ENCODE measurements at regions of chr1 and their contacts with region 1.

Region 1: DNA sequence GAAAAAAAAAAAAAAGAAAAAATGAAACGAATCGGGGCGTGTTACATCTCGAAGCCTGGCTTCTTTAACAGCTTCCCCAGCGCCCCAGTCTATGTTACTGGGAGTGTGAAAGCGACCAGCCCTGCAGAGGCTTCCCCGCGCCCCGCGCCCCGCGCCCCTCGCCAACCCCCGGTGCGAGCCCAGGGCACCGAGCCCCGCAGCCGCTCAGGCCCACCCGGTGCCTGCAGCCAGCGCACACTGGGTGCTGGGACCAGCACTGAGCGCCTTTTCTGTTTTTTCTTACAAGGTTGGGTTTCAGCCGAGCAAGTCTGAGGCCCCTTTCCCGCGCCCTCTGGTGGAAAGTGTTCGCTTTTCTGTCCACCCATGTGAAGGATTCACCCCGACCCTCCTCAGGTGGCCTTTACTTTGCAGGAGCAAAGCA is 42.1 kb upstream of the ZNF496 start:
- DNase-seq: peak; percentile 9 to 74 (median 65)
- ATAC-seq: peak; percentile 86
- H3K4me3 ChIP-seq: peak overlapping the region in 1 of 2 experiments; percentile 37
- H3K4me3 Mint-ChIP-seq: peak overlapping the region; percentile 56
- H3K27ac ChIP-seq: no peak overlapping the region
- H3K27ac Mint-ChIP-seq: no peak overlapping the region
- H3K4me1 ChIP-seq: no peaks in the 10 kb centered on the region
- H3K4me1 Mint-ChIP-seq: peaks cover 6% of the 10 kb centered on the region
- H3K27me3 ChIP-seq: no peaks in the 10 kb centered on the region
- H3K27me3 Mint-ChIP-seq: peaks cover 2% of the 10 kb centered on the region
- CTCF ChIP-seq: peak; percentile 48

Region 2: GRCh38 chr1:247360991-247361731 is 12.6 kb before region 1 on chr1:
- CTCF ChIA-PET with region 1: interaction called, 10 read pairs
- POLR2A ChIA-PET with region 1: no interaction called
- intact Hi-C with region 1: no loop called
- DNase-seq: no peak
- ATAC-seq: no peak
- H3K4me3 ChIP-seq: no peak overlapping the region
- H3K4me3 Mint-ChIP-seq: no peak overlapping the region
- H3K27ac ChIP-seq: no peak overlapping the region
- H3K27ac Mint-ChIP-seq: no peak overlapping the region
- H3K4me1 ChIP-seq: no peaks in the 10 kb centered on the region
- H3K4me1 Mint-ChIP-seq: peaks cover 3% of the 10 kb centered on the region
- H3K27me3 ChIP-seq: peaks cover 2 to 3% of the 10 kb centered on the region in 2 experiments
- H3K27me3 Mint-ChIP-seq: peaks cover 26% of the 10 kb centered on the region
- CTCF ChIP-seq: no peak

Region 3: DNA sequence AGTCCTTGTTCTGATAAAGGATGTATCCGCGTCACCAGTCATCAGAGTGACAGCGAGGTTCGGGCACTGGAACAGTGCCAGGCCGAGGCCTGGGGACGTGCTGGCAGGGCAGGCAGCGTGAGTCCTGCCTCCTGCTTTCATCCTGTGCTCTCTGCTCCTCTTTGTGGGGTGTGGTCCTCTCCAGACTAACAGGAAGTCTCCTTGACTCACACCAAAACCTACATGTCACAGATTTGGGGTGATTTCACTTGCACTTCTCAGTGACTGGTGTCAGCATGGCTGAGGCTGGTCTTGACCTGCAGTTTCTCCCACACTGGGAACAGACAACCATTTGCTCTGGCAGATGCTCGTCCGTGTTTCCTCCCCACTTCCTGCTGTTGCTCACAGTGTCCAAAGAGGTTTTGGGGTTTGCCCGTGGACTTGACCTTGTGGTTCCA is 33.5 kb after region 1 on chr1:
- CTCF ChIA-PET with region 1: no interaction called
- POLR2A ChIA-PET with region 1: no interaction called
- intact Hi-C with region 1: no loop called
- DNase-seq: peak; percentile 27 to 86 (median 76)
- ATAC-seq: peak; percentile 88
- H3K4me3 ChIP-seq: peak overlapping the region; percentile 7 to 43
- H3K4me3 Mint-ChIP-seq: peak overlapping the region; percentile 65
- H3K27ac ChIP-seq: peak overlapping the region; percentile 52 to 59
- H3K27ac Mint-ChIP-seq: peak overlapping the region; percentile 91
- H3K4me1 ChIP-seq: peaks cover 31% of the 10 kb centered on the region
- H3K4me1 Mint-ChIP-seq: peaks cover 35% of the 10 kb centered on the region
- H3K27me3 ChIP-seq: no peaks in the 10 kb centered on the region
- H3K27me3 Mint-ChIP-seq: no peaks in the 10 kb centered on the region
- CTCF ChIP-seq: no peak

Region 4: DNA sequence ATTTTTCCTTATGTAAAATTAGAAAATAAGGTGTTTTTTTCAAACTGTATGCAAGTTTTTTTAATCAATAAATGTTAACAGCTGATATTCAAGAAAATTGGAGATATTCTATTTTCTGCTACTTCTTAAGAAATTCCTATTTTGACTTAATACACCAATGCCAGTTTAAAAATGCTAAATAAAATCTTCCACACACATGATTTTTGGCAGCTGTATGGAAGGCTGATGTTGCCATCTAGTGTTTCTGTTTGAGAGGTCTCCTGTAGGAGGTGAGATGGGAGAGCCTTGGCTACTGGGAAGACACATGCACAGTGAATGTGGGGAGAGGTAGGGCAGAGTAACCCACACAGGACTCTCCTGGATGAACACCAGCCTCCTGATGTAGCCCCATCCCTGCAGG is 113.3 kb after region 1 on chr1:
- CTCF ChIA-PET with region 1: interaction called, 82 read pairs
- POLR2A ChIA-PET with region 1: no interaction called
- intact Hi-C with region 1: loop called (anchors 1 kb)
- DNase-seq: peak in 7 of 9 experiments; percentile 6 to 71 (median 34)
- ATAC-seq: peak; percentile 65
- H3K4me3 ChIP-seq: no peak overlapping the region
- H3K4me3 Mint-ChIP-seq: no peak overlapping the region
- H3K27ac ChIP-seq: no peak overlapping the region
- H3K27ac Mint-ChIP-seq: no peak overlapping the region
- H3K4me1 ChIP-seq: no peaks in the 10 kb centered on the region
- H3K4me1 Mint-ChIP-seq: no peaks in the 10 kb centered on the region
- H3K27me3 ChIP-seq: no peaks in the 10 kb centered on the region
- H3K27me3 Mint-ChIP-seq: peaks cover 3% of the 10 kb centered on the region
- CTCF ChIP-seq: peak; percentile 78

Region 5: GRCh38 chr1:247576495-247576894 is 202.8 kb after region 1 on chr1:
- CTCF ChIA-PET with region 1: no interaction called
- POLR2A ChIA-PET with region 1: no interaction called
- intact Hi-C with region 1: loop called (anchors 5 kb)
- DNase-seq: peak in 1 of 9 experiments; percentile 20
- ATAC-seq: no peak
- H3K4me3 ChIP-seq: no peak overlapping the region
- H3K4me3 Mint-ChIP-seq: no peak overlapping the region
- H3K27ac ChIP-seq: no peak overlapping the region
- H3K27ac Mint-ChIP-seq: no peak overlapping the region
- H3K4me1 ChIP-seq: no peaks in the 10 kb centered on the region
- H3K4me1 Mint-ChIP-seq: no peaks in the 10 kb centered on the region
- H3K27me3 ChIP-seq: no peaks in the 10 kb centered on the region
- H3K27me3 Mint-ChIP-seq: peaks cover 5% of the 10 kb centered on the region
- CTCF ChIP-seq: no peak

Measured in CD8-positive, alpha-beta T cell (primary cell).